ENCODE measurements at regions of chr1 and their contacts with region 1.

Region 1: GRCh38 chr1:29181413-29182225 is at the start of gene SRSF4:
- DNase-seq: peak; percentile 95 to 99 (median 98)
- H3K4me3 ChIP-seq: peak within 1 kb of the TSS; percentile 66 to 100 (median 95)
- H3K27ac ChIP-seq: peak within 1 kb of the TSS; percentile 87 to 100 (median 99)
- H3K27me3 ChIP-seq: no peaks in the 10 kb centered on the region
- CTCF ChIP-seq: peak; percentile 66 to 94 (median 83)
- total RNA-seq, gene SRSF4: 52.7 to 84.2 (median 65.8) TPM

Region 2: DNA sequence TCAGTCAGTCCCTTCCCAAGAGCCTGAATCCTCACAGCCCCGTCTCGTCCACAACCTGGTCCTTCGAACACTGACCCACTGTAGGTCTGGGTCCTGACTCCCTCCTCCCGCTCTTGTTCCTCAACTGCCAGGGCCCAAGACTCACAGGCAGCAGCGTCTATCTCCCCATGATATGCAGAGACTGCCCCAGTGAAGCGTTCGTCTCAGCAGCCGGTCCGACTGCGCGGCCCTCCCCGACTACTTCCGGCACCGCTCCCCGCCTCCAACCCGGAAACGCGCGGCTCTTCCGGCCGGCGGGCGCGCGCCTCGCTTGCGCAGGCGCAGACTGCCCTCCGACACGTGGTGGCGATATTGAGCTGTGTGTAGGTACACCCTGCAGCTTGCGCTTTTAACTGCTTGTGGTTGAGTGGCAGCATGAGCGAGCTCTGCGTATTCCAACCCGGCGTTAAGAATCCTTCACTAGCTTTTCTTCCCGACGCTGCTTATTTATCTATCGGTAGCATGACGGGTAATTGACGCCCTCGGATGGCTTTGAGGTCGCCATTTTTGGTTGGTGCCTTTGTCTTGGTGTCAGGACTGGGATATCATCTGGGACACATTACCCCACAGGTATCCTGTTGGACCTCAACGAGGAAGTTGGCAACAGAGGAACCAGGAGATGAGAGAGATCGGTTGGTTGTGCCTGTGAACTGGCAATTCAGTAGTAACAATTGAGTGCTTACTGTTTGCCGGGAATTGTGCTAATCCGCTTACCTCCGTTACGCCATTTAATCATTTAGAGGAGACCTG is 538.6 kb before region 1 on chr1 and contains the start of gene TAF12:
- intact Hi-C with region 1: loop called in 1 of 2 experiments (anchors 5 kb)
- DNase-seq: peak; percentile 80 to 92 (median 86)
- H3K4me3 ChIP-seq: peak within 1 kb of the TSS; percentile 57 to 98 (median 84)
- H3K27ac ChIP-seq: peak within 1 kb of the TSS; percentile 52 to 95 (median 90)
- H3K27me3 ChIP-seq: no peaks in the 10 kb centered on the region
- CTCF ChIP-seq: peak in 55 of 56 donors; percentile 29 to 87 (median 62)
- total RNA-seq, gene TAF12: 10.2 to 23.1 (median 15.5) TPM

Region 3: GRCh38 chr1:28668191-28668955 is 513.2 kb before region 1 on chr1 and contains the start of gene GMEB1:
- intact Hi-C with region 1: loop called in 1 of 2 experiments (anchors 5 kb)
- DNase-seq: peak; percentile 68 to 89 (median 77)
- H3K4me3 ChIP-seq: peak within 1 kb of the TSS; percentile 67 to 100 (median 93)
- H3K27ac ChIP-seq: peak within 1 kb of the TSS; percentile 92 to 100 (median 98)
- H3K27me3 ChIP-seq: no peaks in the 10 kb centered on the region
- CTCF ChIP-seq: peak in 22 of 56 donors; percentile 6 to 45 (median 24)
- total RNA-seq, gene GMEB1: 7.1 to 15.1 (median 10.6) TPM

Region 4: GRCh38 chr1:28914228-28915030 is 267.2 kb before region 1 on chr1 and contains the start of gene EPB41:
- intact Hi-C with region 1: loop called in 1 of 2 experiments (anchors 10 kb)
- DNase-seq: peak; percentile 71 to 93 (median 84)
- H3K4me3 ChIP-seq: peak within 1 kb of the TSS; percentile 49 to 85 (median 70)
- H3K27ac ChIP-seq: peak within 1 kb of the TSS in 35 of 59 donors; percentile 4 to 82 (median 43)
- H3K27me3 ChIP-seq: no peaks in the 10 kb centered on the region
- CTCF ChIP-seq: peak in 14 of 56 donors; percentile 12 to 49 (median 26)
- total RNA-seq, gene EPB41: 17.4 to 59.1 (median 38.8) TPM

Region 5: GRCh38 chr1:29133861-29134694 is 47.5 kb before region 1 on chr1:
- intact Hi-C with region 1: loop called in 1 of 2 experiments (anchors 5 kb)
- DNase-seq: no peak
- H3K4me3 ChIP-seq: peak overlapping the region in 12 of 59 donors; percentile 4 to 30 (median 9)
- H3K27ac ChIP-seq: peak overlapping the region in 7 of 59 donors; percentile 3 to 62 (median 32)
- H3K27me3 ChIP-seq: peaks cover 0 to 8% (median 0%) of the 10 kb centered on the region in 45 donors
- CTCF ChIP-seq: peak in 1 of 56 donors; percentile 1

Region 6: DNA sequence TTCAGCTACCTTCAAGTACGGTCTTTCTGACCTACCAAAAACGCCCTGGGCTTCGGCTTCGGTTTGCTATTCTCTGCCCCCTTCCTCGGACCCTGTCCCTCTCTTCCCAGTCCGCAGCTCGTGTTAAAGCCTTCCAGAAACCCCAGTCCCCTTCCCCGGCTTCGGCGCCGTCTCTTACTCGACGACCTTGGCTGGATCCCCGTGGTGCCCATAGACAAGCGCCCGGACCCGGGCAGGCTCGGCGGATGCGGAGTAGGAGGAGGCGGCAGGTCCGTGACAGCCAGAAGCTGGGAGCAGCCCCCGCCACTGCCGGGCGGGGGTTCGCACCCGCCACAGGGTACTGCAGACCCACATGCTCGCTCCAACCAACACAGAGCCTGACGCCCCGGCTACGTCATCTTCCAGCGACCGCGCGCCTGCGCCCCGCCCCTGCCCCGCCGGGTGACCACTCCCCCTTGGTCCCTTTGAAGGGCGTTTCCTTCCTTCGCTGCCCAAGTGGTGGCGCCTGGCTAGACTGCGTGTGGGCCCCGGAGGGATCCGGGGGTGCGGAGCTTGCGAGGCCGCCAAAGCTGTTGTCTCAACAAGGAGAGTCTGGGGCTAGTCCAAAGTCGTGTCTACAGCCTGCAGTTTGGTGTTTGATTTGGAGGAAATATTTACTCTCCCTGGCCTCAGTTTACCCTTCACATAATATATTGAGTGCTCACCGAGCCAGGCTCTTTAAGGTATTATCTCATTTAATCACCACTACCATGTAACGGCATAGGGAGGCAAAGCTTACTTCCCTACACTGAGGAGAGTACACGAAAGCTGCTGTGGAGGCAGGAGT is 49.1 kb after region 1 on chr1 and contains the start of gene MECR:
- intact Hi-C with region 1: loop called in 1 of 2 experiments (anchors 5 kb)
- DNase-seq: peak; percentile 92 to 98 (median 95)
- H3K4me3 ChIP-seq: peak within 1 kb of the TSS; percentile 59 to 97 (median 85)
- H3K27ac ChIP-seq: peak within 1 kb of the TSS in 44 of 59 donors; percentile 7 to 89 (median 66)
- H3K27me3 ChIP-seq: no peaks in the 10 kb centered on the region
- CTCF ChIP-seq: peak in 55 of 56 donors; percentile 18 to 70 (median 52)
- total RNA-seq, gene MECR: 28.4 to 65.3 (median 45.9) TPM

Region 7: DNA sequence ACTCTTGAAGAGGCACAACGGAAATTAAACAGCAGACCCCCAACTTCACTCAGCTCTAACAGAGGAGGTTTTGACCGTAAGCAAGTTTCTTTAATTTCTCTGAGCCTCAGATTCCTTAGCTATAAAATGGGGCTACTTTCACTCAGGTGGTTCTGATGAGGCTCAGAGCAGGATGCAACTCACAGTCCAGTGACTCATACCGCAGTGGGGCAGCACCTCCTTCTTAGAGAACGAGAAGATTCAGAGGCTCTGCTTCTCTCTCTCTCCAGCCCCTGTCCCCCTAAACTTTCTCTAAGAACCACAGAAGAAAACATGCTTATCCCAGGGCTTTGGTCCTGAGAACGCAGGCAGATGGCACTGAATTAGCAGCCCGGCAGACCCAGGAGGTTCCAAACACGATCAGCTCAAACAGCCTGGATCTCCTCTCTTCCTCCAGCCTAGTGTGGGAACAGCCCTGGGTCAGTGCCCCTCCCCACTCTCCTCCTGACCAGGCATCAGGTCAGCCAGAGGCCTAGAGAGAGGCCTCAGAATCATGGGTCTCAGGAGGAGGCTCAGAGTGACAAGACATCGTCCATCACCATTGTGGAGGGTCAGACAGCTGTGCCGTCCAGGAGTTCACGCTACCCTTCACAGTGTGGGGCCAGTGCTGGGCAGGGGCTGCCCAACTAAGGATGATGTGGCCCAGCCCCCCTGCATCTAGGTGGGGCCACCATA is 487.7 kb after region 1 on chr1:
- intact Hi-C with region 1: no loop called
- DNase-seq: peak in 1 of 10 donors; percentile 23
- H3K4me3 ChIP-seq: no peak overlapping the region
- H3K27ac ChIP-seq: no peak overlapping the region
- H3K27me3 ChIP-seq: peaks cover 0 to 7% (median 0%) of the 10 kb centered on the region in 45 donors
- CTCF ChIP-seq: no peak